ENCODE measurements at regions of chr2 and their contacts with region 1.

Region 1: GRCh38 chr2:169528271-169528701 is 18.8 kb downstream of the KLHL41 start:
- DNase-seq: peak; percentile 56 to 64 (median 58)
- H3K4me3 ChIP-seq: no peak overlapping the region
- H3K4me3 Mint-ChIP-seq: no peak overlapping the region
- H3K27ac ChIP-seq: no peak overlapping the region
- H3K27ac Mint-ChIP-seq: peak overlapping the region in 3 of 7 donors; percentile 9 to 24 (median 23)
- H3K4me1 ChIP-seq: no peaks in the 10 kb centered on the region
- H3K4me1 Mint-ChIP-seq: no peaks in the 10 kb centered on the region
- H3K27me3 ChIP-seq: no peaks in the 10 kb centered on the region
- H3K27me3 Mint-ChIP-seq: no peaks in the 10 kb centered on the region

Region 2: DNA sequence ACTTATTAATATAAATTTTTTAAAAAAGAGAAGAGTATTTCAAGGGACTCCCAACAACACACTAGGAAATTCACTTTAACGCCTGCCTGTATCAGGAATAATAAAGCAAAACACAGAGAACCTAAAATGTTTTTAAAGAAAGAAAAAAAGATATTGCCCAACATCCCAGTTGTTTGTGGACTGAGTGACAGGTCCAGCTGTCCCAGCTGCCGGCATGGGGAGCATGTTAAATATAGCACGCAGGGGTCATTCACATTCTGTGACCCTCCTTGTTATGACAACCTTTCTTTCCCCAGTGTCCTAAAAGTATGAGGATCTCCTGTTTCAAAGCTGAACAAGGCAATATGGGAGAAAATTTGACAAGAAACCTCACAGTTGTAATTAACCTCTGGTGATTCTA is 14.4 kb before region 1 on chr2:
- CTCF ChIA-PET with region 1: interaction called, 11 read pairs
- POLR2A ChIA-PET with region 1: no interaction called
- intact Hi-C with region 1: no loop called
- DNase-seq: no peak
- H3K4me3 ChIP-seq: no peak overlapping the region
- H3K4me3 Mint-ChIP-seq: no peak overlapping the region
- H3K27ac ChIP-seq: no peak overlapping the region
- H3K27ac Mint-ChIP-seq: no peak overlapping the region
- H3K4me1 ChIP-seq: no peaks in the 10 kb centered on the region
- H3K4me1 Mint-ChIP-seq: no peaks in the 10 kb centered on the region
- H3K27me3 ChIP-seq: no peaks in the 10 kb centered on the region
- H3K27me3 Mint-ChIP-seq: no peaks in the 10 kb centered on the region

Region 3: GRCh38 chr2:169540146-169540545 is 11.9 kb after region 1 on chr2:
- CTCF ChIA-PET with region 1: interaction called, 10 read pairs
- POLR2A ChIA-PET with region 1: no interaction called
- intact Hi-C with region 1: no loop called
- DNase-seq: no peak
- H3K4me3 ChIP-seq: no peak overlapping the region
- H3K4me3 Mint-ChIP-seq: no peak overlapping the region
- H3K27ac ChIP-seq: no peak overlapping the region
- H3K27ac Mint-ChIP-seq: no peak overlapping the region
- H3K4me1 ChIP-seq: no peaks in the 10 kb centered on the region
- H3K4me1 Mint-ChIP-seq: no peaks in the 10 kb centered on the region
- H3K27me3 ChIP-seq: no peaks in the 10 kb centered on the region
- H3K27me3 Mint-ChIP-seq: no peaks in the 10 kb centered on the region

Region 4: DNA sequence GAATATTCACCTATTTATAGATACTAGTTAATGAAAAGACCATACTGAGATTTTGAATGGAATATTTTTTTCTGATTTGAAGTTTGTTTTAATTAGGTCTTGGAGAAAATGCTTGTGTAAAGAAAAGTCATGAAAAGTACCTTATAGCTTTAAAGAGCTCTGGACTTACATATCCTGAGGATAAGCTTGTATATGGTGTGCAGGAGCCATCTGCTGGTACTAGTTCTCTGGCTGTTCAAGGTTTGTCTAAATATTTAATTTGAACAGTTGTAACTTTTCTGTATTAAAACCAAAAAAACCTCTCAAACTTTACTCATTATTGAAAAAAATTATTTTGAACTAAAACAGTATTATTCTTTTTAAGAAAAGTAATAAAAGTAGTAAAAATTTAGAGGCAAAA is 349.1 kb after region 1 on chr2:
- CTCF ChIA-PET with region 1: no interaction called
- POLR2A ChIA-PET with region 1: no interaction called
- intact Hi-C with region 1: loop called (anchors 5 kb)
- DNase-seq: no peak
- H3K4me3 ChIP-seq: no peak overlapping the region
- H3K4me3 Mint-ChIP-seq: no peak overlapping the region
- H3K27ac ChIP-seq: no peak overlapping the region
- H3K27ac Mint-ChIP-seq: peak overlapping the region in 1 of 7 donors; percentile 35
- H3K4me1 ChIP-seq: no peaks in the 10 kb centered on the region
- H3K4me1 Mint-ChIP-seq: peaks cover 0 to 2% (median 0%) of the 10 kb centered on the region in 4 donors
- H3K27me3 ChIP-seq: no peaks in the 10 kb centered on the region
- H3K27me3 Mint-ChIP-seq: no peaks in the 10 kb centered on the region

Region 5: GRCh38 chr2:169933124-169933711 is 404.9 kb after region 1 on chr2:
- CTCF ChIA-PET with region 1: interaction called, 13 read pairs
- POLR2A ChIA-PET with region 1: no interaction called
- intact Hi-C with region 1: loop called (anchors 1 kb)
- DNase-seq: peak in 1 of 5 donors; percentile 6
- H3K4me3 ChIP-seq: no peak overlapping the region
- H3K4me3 Mint-ChIP-seq: no peak overlapping the region
- H3K27ac ChIP-seq: no peak overlapping the region
- H3K27ac Mint-ChIP-seq: no peak overlapping the region
- H3K4me1 ChIP-seq: no peaks in the 10 kb centered on the region
- H3K4me1 Mint-ChIP-seq: peaks cover 0 to 4% (median 0%) of the 10 kb centered on the region in 4 donors
- H3K27me3 ChIP-seq: no peaks in the 10 kb centered on the region
- H3K27me3 Mint-ChIP-seq: no peaks in the 10 kb centered on the region